Caco-2 (cell line): ENCODE measurements at regions of chr20 and their contacts with region 1.

Region 1: GRCh38 chr20:64001607-64002011 is 20.7 kb downstream of the PRPF6 start:
- DNase-seq: no peak
- H3K4me3 ChIP-seq: no peak overlapping the region
- H3K4me3 Mint-ChIP-seq: no peak overlapping the region
- H3K27ac Mint-ChIP-seq: no peak overlapping the region
- H3K4me1 ChIP-seq: peaks cover 14% of the 10 kb centered on the region
- H3K4me1 Mint-ChIP-seq: no peaks in the 10 kb centered on the region
- H3K27me3 ChIP-seq: no peaks in the 10 kb centered on the region
- H3K27me3 Mint-ChIP-seq: no peaks in the 10 kb centered on the region
- CTCF ChIP-seq: no peak

Region 2: GRCh38 chr20:64024141-64024990 is 22.8 kb after region 1 on chr20:
- CTCF ChIA-PET with region 1: interaction called, 5 read pairs
- POLR2A ChIA-PET with region 1: interaction called, 3 read pairs
- intact Hi-C with region 1: loop called (anchors 1 kb)
- DNase-seq: peak; percentile 92 to 95
- H3K4me3 ChIP-seq: no peak overlapping the region
- H3K4me3 Mint-ChIP-seq: peak overlapping the region; percentile 55
- H3K27ac Mint-ChIP-seq: peak overlapping the region; percentile 83
- H3K4me1 ChIP-seq: peaks cover 34% of the 10 kb centered on the region
- H3K4me1 Mint-ChIP-seq: peaks cover 37% of the 10 kb centered on the region
- H3K27me3 ChIP-seq: no peaks in the 10 kb centered on the region
- H3K27me3 Mint-ChIP-seq: no peaks in the 10 kb centered on the region
- CTCF ChIP-seq: peak in 1 of 2 experiments; percentile 19